Heart right ventricle (tissue), 16 donors: ENCODE measurements at regions of chr7 and their contacts with region 1.

Region 1: DNA sequence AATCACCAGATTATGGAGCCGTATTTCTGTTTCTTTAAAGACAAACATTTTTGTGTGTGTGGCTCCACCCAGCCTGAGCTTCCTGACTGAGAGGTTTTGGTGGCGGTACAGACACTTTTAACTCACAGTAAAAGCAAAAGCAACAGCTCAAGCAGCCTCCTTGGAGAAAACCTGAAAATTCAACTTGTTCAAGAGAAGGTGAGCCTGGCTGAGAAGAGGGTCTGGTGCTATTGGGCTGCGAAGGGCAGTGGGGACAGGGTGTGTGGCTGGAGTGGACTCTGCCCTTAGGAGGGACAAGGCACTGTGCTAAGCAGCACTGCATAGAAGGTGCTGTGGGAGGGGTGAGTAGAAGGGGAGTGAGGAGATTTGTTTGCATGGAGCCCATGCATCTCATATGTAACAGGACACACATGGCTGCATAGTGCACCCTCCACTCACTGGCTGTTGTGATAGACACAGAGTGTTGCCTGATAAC is at the start of gene GIMAP7:
- DNase-seq: peak in 1 of 2 donors; percentile 38
- ATAC-seq: peak; percentile 54 to 83 (median 80)
- H3K4me3 ChIP-seq: peak within 1 kb of the TSS; percentile 32 to 68 (median 56)
- H3K27ac ChIP-seq: peak within 1 kb of the TSS; percentile 60 to 95 (median 80)
- H3K4me1 ChIP-seq: peaks cover 0 to 25% (median 3%) of the 10 kb centered on the region in 9 donors
- H3K27me3 ChIP-seq: no peaks in the 10 kb centered on the region
- CTCF ChIP-seq: no peak
- total RNA-seq, gene GIMAP7: 7.5 to 41.2 (median 19.6) TPM

Region 2: DNA sequence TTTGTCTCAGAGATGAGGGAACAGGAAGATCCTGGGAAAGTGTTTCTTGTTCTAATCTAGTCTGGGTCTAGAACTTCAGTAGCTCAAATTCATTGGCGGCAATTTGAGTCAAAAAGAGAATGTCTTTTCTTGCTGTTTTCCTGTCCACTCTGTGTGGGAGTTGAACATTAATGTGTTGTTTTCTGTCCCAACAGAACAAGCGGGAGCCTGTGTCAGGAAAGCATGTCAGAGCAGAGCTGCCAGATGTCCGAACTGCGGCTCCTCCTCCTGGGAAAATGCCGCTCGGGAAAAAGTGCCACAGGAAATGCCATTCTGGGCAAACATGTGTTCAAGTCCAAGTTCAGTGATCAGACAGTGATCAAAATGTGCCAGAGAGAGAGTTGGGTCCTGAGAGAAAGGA is 48.3 kb before region 1 on chr7:
- intact Hi-C with region 1: loop called in 3 of 10 experiments (anchors 5 kb)
- DNase-seq: no peak
- ATAC-seq: peak; percentile 36 to 87 (median 76)
- H3K4me3 ChIP-seq: peak overlapping the region; percentile 10 to 54 (median 42)
- H3K27ac ChIP-seq: peak overlapping the region; percentile 10 to 73 (median 46)
- H3K4me1 ChIP-seq: peaks cover 0 to 62% (median 31%) of the 10 kb centered on the region in 9 donors
- H3K27me3 ChIP-seq: no peaks in the 10 kb centered on the region
- CTCF ChIP-seq: no peak

Region 3: DNA sequence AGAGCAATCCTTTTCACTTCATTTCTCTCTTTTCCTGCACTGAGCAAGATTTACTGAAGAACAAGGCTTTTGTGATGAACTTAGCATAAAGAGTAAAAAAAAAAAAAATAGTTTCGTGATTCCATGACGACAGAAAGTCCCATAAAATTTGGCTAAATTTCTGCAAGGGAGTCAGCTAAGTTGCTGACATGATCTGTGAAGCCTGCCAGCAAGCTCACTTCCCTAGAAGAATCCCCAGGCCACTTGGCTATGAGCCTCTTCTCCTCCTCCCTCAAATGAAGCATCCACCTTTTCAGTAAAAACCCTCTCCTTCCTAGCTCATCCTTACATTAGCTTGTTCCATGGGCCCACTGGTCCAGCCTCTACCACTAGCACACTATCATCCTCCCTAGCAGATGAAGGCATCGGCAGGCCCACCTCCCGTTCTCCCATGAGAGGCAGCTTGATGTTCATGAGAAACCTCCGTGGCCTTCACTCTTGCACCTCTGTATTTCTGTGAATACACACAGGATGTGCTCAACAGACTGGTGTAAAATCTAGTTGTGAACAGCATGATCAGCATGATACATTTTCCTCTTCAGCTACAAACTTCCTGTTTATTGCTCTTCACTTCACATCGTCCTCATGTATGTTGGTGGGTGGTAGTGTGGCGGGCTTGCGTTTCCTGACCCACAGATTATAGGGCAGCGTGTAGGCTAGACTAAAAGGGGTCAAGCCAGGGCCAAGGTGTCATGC is 33.4 kb before region 1 on chr7:
- intact Hi-C with region 1: loop called in 1 of 10 experiments (anchors 5 kb)
- DNase-seq: no peak
- ATAC-seq: peak in 4 of 8 donors; percentile 15 to 31 (median 30)
- H3K4me3 ChIP-seq: peak overlapping the region in 1 of 10 donors; percentile 2
- H3K27ac ChIP-seq: peak overlapping the region in 9 of 10 donors; percentile 34 to 93 (median 63)
- H3K4me1 ChIP-seq: peaks cover 0 to 87% (median 68%) of the 10 kb centered on the region in 9 donors
- H3K27me3 ChIP-seq: no peaks in the 10 kb centered on the region
- CTCF ChIP-seq: no peak

Region 4: DNA sequence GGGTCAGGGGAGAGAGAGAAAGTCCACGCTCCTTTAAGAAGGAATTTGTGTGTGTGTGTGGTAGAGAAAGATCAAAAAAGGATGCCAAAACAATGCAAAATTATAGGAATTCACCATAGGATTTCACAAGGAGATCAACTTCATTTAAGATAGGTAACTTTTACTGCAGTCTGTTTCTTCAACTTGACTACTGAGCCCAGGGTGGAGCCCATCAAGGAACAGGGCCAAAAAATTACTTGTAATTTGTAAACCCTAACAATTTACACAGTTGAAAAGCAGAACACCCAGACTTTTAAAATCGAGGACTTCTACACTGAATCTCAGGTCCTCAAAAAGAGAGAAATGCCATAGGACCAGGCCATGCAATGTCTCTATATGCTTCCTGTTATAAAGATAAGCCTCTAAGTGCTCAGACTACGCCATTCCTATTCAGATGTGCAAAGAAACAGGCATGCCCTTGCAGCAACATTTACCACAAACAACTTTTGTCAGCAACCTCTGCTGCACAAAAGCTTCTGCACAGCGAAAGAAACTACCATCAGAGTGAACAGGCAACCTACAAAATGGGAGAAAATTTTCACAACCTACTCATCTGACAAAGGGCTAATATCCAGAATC is 41.8 kb after region 1 on chr7:
- intact Hi-C with region 1: no loop called
- DNase-seq: no peak
- ATAC-seq: peak in 7 of 8 donors; percentile 42 to 82 (median 64)
- H3K4me3 ChIP-seq: no peak overlapping the region
- H3K27ac ChIP-seq: peak overlapping the region in 8 of 10 donors; percentile 41 to 77 (median 50)
- H3K4me1 ChIP-seq: peaks cover 0 to 13% (median 0%) of the 10 kb centered on the region in 9 donors
- H3K27me3 ChIP-seq: no peaks in the 10 kb centered on the region
- CTCF ChIP-seq: no peak

Region 5: GRCh38 chr7:150586785-150587152 is 72.0 kb after region 1 on chr7:
- intact Hi-C with region 1: loop called in 1 of 10 experiments (anchors 5 kb)
- DNase-seq: peak in 1 of 2 donors; percentile 49
- ATAC-seq: peak; percentile 89 to 97 (median 93)
- H3K4me3 ChIP-seq: peak overlapping the region in 2 of 10 donors; percentile 14 to 25
- H3K27ac ChIP-seq: peak overlapping the region; percentile 59 to 95 (median 78)
- H3K4me1 ChIP-seq: peaks cover 0 to 41% (median 29%) of the 10 kb centered on the region in 9 donors
- H3K27me3 ChIP-seq: no peaks in the 10 kb centered on the region
- CTCF ChIP-seq: no peak

Region 6: GRCh38 chr7:150753826-150754603 is 239.2 kb after region 1 on chr7:
- intact Hi-C with region 1: loop called in 1 of 10 experiments (anchors 10 kb)
- DNase-seq: peak in 1 of 2 donors; percentile 43
- ATAC-seq: peak; percentile 36 to 67 (median 54)
- H3K4me3 ChIP-seq: no peak overlapping the region
- H3K27ac ChIP-seq: peak overlapping the region in 9 of 10 donors; percentile 25 to 87 (median 83)
- H3K4me1 ChIP-seq: peaks cover 20 to 68% (median 51%) of the 10 kb centered on the region in 9 donors
- H3K27me3 ChIP-seq: no peaks in the 10 kb centered on the region
- CTCF ChIP-seq: peak in 7 of 9 donors; percentile 8 to 62 (median 50)